GM12878 (cell line): ENCODE measurements at regions of chr3 and their contacts with region 1.

Region 1: DNA sequence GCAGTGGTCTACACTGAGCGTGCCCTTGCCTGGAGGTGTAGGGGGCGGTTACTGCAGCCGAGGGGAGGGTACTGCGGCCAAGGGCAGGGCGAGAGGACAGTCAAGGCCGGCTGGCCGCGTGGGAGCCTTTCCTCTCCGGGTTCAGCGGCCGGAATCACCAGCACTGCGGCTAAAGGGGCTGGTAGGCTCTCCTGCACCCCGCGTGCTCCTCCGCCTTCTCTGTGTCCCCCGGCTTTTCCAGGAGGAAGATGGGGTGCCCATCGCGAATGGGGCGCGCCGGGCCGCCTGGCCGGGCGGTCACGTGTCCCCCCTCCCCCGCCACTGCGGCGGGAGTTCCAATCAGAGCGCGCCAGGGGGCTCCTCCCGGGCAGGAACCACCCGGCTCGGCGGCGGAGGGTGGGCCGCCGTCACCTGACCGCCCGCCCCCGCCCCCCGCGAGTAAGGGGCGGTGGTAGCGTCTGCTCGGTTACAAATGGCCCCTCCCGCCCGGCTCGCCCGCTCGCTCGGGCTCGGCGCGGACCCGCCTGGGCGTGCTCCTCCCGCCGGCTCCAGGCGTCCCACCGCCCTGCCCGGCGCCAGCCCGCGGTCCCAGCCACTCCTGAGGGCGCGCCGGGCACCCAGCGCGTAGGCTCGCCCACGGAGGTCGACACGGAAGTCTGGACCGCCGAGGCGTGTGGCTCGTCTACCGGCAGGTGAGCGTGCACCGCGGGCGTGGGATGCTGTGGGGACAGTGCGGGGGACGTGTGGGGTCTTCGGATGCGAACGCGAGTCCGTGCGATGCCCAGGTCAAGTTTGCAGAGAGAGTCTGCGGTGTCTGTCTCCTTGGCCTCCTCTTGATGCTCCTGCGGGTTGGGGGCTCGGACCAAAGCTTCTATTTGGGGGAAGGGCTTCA is 242.6 kb upstream of the TOPAZ1 start:
- DNase-seq: no peak
- ATAC-seq: peak; percentile 22
- H3K4me3 ChIP-seq: peak overlapping the region; percentile 83
- H3K27ac ChIP-seq: no peak overlapping the region; the same call in 1 of the 2 replicates
- H3K4me1 ChIP-seq: peaks cover 15% of the 10 kb centered on the region
- H3K27me3 ChIP-seq: peaks cover 16 to 18% of the 10 kb centered on the region in 2 experiments
- CTCF ChIP-seq: no peak
- EP300 ChIP-seq: no peak
- POLR2A ChIP-seq: peak; percentile 83
- RAD21 ChIP-seq: no peak

Region 2: GRCh38 chr3:43236008-43236407 is 763.1 kb before region 1 on chr3:
- CTCF ChIA-PET with region 1: no interaction called
- POLR2A ChIA-PET with region 1: no interaction called
- RAD21 ChIA-PET with region 1: no interaction called
- SMC1A ChIA-PET with region 1: no interaction called
- in situ Hi-C with region 1: no loop called
- intact Hi-C with region 1: no loop called
- DNase-seq: no peak
- ATAC-seq: no peak
- H3K4me3 ChIP-seq: no peak overlapping the region
- H3K27ac ChIP-seq: no peak overlapping the region
- H3K4me1 ChIP-seq: no peaks in the 10 kb centered on the region
- H3K27me3 ChIP-seq: peaks cover 0 to 3% of the 10 kb centered on the region in 2 experiments; a peak in 1 of 4 replicates
- CTCF ChIP-seq: no peak
- EP300 ChIP-seq: no peak
- POLR2A ChIP-seq: no peak
- RAD21 ChIP-seq: no peak

Region 3: DNA sequence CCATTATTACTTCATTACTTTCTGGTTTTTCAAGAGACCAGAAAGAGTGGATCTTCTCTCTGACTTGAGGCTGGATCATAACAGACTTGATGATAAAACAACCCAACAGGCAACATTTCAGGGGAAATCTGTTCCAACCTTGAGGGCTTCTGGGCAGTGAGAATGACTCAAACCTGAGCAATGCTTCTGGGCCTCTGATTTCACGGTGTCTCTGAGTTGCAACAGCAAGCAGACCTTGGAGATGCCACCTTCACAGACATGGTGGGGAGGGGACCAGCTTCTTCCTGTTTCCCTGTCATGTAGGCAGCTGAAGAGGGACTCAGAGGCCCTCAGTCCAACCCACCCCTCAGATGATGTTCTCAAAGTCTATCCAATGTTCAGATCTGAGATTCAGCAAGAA is 204.3 kb before region 1 on chr3:
- CTCF ChIA-PET with region 1: no interaction called
- POLR2A ChIA-PET with region 1: no interaction called
- RAD21 ChIA-PET with region 1: no interaction called
- SMC1A ChIA-PET with region 1: no interaction called
- in situ Hi-C with region 1: no loop called
- intact Hi-C with region 1: no loop called
- DNase-seq: no peak
- ATAC-seq: no peak
- H3K4me3 ChIP-seq: no peak overlapping the region
- H3K27ac ChIP-seq: no peak overlapping the region
- H3K4me1 ChIP-seq: no peaks in the 10 kb centered on the region
- H3K27me3 ChIP-seq: no peaks in the 10 kb centered on the region; a peak in 1 of 4 replicates
- CTCF ChIP-seq: no peak
- EP300 ChIP-seq: no peak
- POLR2A ChIP-seq: no peak
- RAD21 ChIP-seq: no peak

Region 4: GRCh38 chr3:43855674-43856299 is 143.3 kb before region 1 on chr3:
- CTCF ChIA-PET with region 1: interaction called, 12 read pairs
- POLR2A ChIA-PET with region 1: no interaction called
- RAD21 ChIA-PET with region 1: interaction called, 3 read pairs
- SMC1A ChIA-PET with region 1: interaction called, 3 read pairs
- in situ Hi-C with region 1: no loop called
- intact Hi-C with region 1: no loop called
- DNase-seq: peak; percentile 3
- ATAC-seq: peak; percentile 97
- H3K4me3 ChIP-seq: no peak overlapping the region
- H3K27ac ChIP-seq: no peak overlapping the region
- H3K4me1 ChIP-seq: no peaks in the 10 kb centered on the region
- H3K27me3 ChIP-seq: peaks cover 4 to 7% of the 10 kb centered on the region in 2 experiments
- CTCF ChIP-seq: peak; percentile 79 to 80 (median 80)
- EP300 ChIP-seq: no peak
- POLR2A ChIP-seq: no peak
- RAD21 ChIP-seq: peak; percentile 75

Region 5: GRCh38 chr3:44021651-44022594 is 22.8 kb after region 1 on chr3:
- CTCF ChIA-PET with region 1: interaction called, 5 read pairs
- POLR2A ChIA-PET with region 1: no interaction called
- RAD21 ChIA-PET with region 1: interaction called, 3 read pairs
- SMC1A ChIA-PET with region 1: interaction called, 12 read pairs
- in situ Hi-C with region 1: no loop called
- intact Hi-C with region 1: no loop called
- DNase-seq: no peak
- ATAC-seq: peak; percentile 36; the same call in 2 of the 3 replicates
- H3K4me3 ChIP-seq: peak overlapping the region; percentile 66
- H3K27ac ChIP-seq: no peak overlapping the region; the same call in 1 of the 2 replicates
- H3K4me1 ChIP-seq: no peaks in the 10 kb centered on the region
- H3K27me3 ChIP-seq: no peaks in the 10 kb centered on the region
- CTCF ChIP-seq: no peak
- EP300 ChIP-seq: no peak
- POLR2A ChIP-seq: no peak
- RAD21 ChIP-seq: no peak

Region 6: DNA sequence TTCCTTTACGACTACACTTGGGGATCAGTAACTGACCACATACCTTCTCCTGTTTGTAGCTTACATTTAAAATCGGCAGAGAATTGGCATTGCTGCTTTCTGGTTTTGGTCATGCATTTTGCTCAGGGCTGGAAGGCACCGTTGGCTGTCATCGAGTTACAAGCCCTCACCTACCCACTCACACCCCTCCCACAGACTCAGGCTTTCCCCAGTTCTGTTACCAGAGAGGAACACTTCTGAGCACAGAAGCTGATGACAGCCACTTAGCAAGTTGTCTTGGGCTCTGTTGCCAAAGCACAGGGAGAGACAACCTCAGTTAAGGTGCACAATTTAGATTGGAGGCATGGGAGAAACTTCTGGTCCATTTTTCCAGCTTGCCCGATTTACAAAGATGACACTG is 37.8 kb after region 1 on chr3:
- CTCF ChIA-PET with region 1: interaction called, 4 read pairs
- POLR2A ChIA-PET with region 1: interaction called, 10 read pairs
- RAD21 ChIA-PET with region 1: interaction called, 13 read pairs
- SMC1A ChIA-PET with region 1: interaction called, 87 read pairs
- in situ Hi-C with region 1: no loop called
- intact Hi-C with region 1: no loop called
- DNase-seq: no peak
- ATAC-seq: peak; percentile 66
- H3K4me3 ChIP-seq: no peak overlapping the region
- H3K27ac ChIP-seq: no peak overlapping the region
- H3K4me1 ChIP-seq: peaks cover 23% of the 10 kb centered on the region
- H3K27me3 ChIP-seq: no peaks in the 10 kb centered on the region
- CTCF ChIP-seq: no peak
- EP300 ChIP-seq: no peak
- POLR2A ChIP-seq: no peak
- RAD21 ChIP-seq: no peak

Region 7: GRCh38 chr3:44058022-44058867 is 59.2 kb after region 1 on chr3:
- CTCF ChIA-PET with region 1: interaction called, 15 read pairs
- POLR2A ChIA-PET with region 1: interaction called, 3 read pairs
- RAD21 ChIA-PET with region 1: interaction called, 34 read pairs
- SMC1A ChIA-PET with region 1: interaction called, 20 read pairs
- in situ Hi-C with region 1: no loop called
- intact Hi-C with region 1: no loop called
- DNase-seq: peak; percentile 87
- ATAC-seq: peak; percentile 97
- H3K4me3 ChIP-seq: no peak overlapping the region
- H3K27ac ChIP-seq: peak overlapping the region; percentile 86
- H3K4me1 ChIP-seq: peaks cover 50% of the 10 kb centered on the region
- H3K27me3 ChIP-seq: no peaks in the 10 kb centered on the region
- CTCF ChIP-seq: no peak
- EP300 ChIP-seq: peak; percentile 44 to 66; a peak in 2 of 4 replicates
- POLR2A ChIP-seq: peak; percentile 64
- RAD21 ChIP-seq: no peak

Region 8: GRCh38 chr3:44114142-44114541 is 115.1 kb after region 1 on chr3:
- CTCF ChIA-PET with region 1: interaction called, 47 read pairs
- POLR2A ChIA-PET with region 1: interaction called, 9 read pairs
- RAD21 ChIA-PET with region 1: interaction called, 25 read pairs
- SMC1A ChIA-PET with region 1: interaction called, 13 read pairs
- in situ Hi-C with region 1: no loop called
- intact Hi-C with region 1: loop called (anchors 2 kb)
- DNase-seq: no peak
- ATAC-seq: peak; percentile 96
- H3K4me3 ChIP-seq: no peak overlapping the region
- H3K27ac ChIP-seq: no peak overlapping the region
- H3K4me1 ChIP-seq: no peaks in the 10 kb centered on the region
- H3K27me3 ChIP-seq: no peaks in the 10 kb centered on the region
- CTCF ChIP-seq: peak; percentile 59 to 68 (median 59)
- EP300 ChIP-seq: no peak
- POLR2A ChIP-seq: no peak
- RAD21 ChIP-seq: peak; percentile 63